SK-N-SH (cell line): ENCODE measurements at regions of chr5 and their contacts with region 1.

Region 1: GRCh38 chr5:64811050-64811640 is 42.4 kb downstream of the CWC27 start:
- DNase-seq: peak; percentile 9
- H3K4me3 ChIP-seq: no peak overlapping the region; a peak in 1 of 4 replicates
- H3K27ac ChIP-seq: no peak overlapping the region
- H3K4me1 ChIP-seq: peaks cover 0 to 5% of the 10 kb centered on the region in 2 experiments; a peak in 2 of 4 replicates
- H3K27me3 ChIP-seq: no peaks in the 10 kb centered on the region
- CTCF ChIP-seq: peak; percentile 86
- EP300 ChIP-seq: no peak
- RAD21 ChIP-seq: peak; percentile 92

Region 2: DNA sequence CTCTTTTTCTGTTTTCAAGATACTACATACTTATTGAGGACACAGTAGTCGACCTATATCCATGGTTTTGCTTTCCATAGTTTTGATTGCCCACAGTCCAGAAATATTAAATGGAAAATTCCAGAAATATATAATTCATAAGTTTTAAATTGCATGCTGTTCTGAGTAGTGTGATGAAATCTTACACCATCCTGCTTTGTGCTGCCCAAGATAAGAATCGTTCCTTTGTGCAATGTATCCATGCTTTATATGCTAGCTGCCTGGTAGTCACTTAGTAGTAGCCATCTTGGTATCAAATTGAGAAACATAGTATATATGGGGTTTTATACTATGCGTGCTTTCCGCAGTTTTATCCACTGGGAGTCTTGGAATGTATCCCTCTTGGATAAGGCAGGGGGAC is 16.6 kb after region 1 on chr5:
- CTCF ChIA-PET with region 1: interaction called, 10 read pairs
- POLR2A ChIA-PET with region 1: no interaction called
- DNase-seq: no peak
- H3K4me3 ChIP-seq: no peak overlapping the region
- H3K27ac ChIP-seq: no peak overlapping the region
- H3K4me1 ChIP-seq: no peaks in the 10 kb centered on the region
- H3K27me3 ChIP-seq: no peaks in the 10 kb centered on the region
- CTCF ChIP-seq: no peak
- EP300 ChIP-seq: no peak
- RAD21 ChIP-seq: no peak

Region 3: GRCh38 chr5:64958757-64959391 is 147.7 kb after region 1 on chr5:
- CTCF ChIA-PET with region 1: interaction called, 10 read pairs
- POLR2A ChIA-PET with region 1: no interaction called
- DNase-seq: peak; percentile 11
- H3K4me3 ChIP-seq: no peak overlapping the region
- H3K27ac ChIP-seq: no peak overlapping the region
- H3K4me1 ChIP-seq: no peaks in the 10 kb centered on the region; a peak in 1 of 4 replicates
- H3K27me3 ChIP-seq: no peaks in the 10 kb centered on the region
- CTCF ChIP-seq: peak; percentile 81
- EP300 ChIP-seq: no peak
- RAD21 ChIP-seq: peak; percentile 79

Region 4: DNA sequence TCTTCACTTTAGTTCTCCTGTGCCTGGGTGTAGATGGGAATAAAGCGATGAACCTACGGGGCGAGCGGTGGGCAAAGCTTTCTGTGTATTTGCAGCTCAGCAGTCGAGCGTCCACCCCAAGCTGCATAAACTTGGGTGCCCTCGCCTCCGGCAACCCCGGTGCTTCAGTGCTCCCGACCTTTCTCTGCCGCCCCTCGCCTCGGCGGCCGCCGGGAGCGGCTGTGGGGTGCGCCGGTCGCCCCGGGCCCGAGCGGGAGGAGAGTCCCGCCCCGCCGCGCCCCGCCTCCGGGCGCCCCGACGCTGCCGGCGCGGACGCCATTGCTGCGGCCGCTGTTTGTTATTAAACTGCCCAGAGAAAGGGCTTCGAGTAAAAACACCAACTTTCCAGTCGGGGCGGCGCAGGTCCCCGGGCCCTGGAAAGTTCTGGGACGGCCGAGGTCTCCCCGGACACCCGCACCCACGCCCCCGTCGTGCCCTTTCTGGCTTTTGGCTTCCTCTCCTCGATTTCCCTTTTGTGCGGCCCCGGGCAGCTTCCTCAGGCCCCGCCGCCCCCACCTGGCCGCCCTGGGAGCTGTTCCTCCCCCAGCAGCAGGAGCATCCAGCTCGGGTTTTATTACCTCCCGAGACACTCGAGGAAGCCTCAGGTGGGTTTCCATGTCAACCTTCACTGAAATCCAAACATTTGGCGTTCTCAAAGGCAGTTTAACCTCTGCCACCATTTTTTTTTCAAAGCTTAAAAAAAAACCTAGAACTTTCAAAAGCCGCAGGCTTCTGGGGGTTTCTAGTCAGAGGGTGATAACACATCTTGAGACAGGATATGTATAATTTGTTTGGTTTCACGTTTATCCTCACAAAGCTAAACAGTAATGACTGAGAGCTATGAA is 291.9 kb after region 1 on chr5:
- CTCF ChIA-PET with region 1: interaction called, 11 read pairs
- POLR2A ChIA-PET with region 1: no interaction called
- DNase-seq: peak; percentile 79
- H3K4me3 ChIP-seq: peak overlapping the region in 1 of 2 experiments; percentile 42; a peak in 2 of 4 replicates
- H3K27ac ChIP-seq: peak overlapping the region in 1 of 2 experiments; percentile 22; a peak in 1 of 4 replicates
- H3K4me1 ChIP-seq: peaks cover 6 to 8% of the 10 kb centered on the region in 2 experiments; a peak in 2 of 4 replicates
- H3K27me3 ChIP-seq: no peaks in the 10 kb centered on the region
- CTCF ChIP-seq: no peak
- EP300 ChIP-seq: no peak
- RAD21 ChIP-seq: no peak

Region 5: DNA sequence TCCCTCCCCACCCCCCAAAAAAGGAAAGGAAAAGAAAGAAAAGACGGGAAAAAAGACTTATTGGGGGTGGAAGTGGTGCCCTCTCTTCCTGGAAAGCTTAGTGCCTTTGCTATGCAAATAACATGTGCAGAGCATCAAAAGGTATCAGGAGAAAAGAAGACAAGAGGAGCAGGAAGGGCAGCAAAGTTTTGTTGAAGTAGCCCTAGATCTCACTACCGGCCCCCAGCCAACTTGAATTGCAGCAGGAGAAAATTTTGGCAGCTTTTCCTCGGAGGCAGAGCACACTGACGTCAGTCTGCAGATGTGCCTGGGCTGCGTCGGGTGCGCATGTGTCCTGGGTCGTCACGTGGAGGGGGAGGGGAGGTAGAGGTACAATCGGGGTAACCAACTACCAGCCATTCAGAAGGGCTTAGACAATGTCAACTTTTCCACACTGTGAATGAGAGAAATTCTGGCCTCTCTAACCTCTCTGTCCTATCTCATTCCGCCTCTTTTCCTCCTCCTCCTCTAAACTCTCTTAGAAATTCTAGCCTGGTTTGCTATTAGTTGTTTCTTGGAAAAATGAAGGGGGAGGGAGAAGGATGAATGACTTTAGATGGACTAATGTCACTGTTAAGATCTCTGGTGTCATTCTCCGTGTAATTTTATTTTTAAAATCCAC is 670.6 kb after region 1 on chr5 and contains the start of gene ADAMTS6:
- CTCF ChIA-PET with region 1: interaction called, 53 read pairs
- POLR2A ChIA-PET with region 1: no interaction called
- DNase-seq: peak; percentile 78
- H3K4me3 ChIP-seq: peak within 1 kb of the TSS; percentile 74 to 89
- H3K27ac ChIP-seq: peak within 1 kb of the TSS; percentile 94 to 97
- H3K4me1 ChIP-seq: peaks cover 0 to 12% of the 10 kb centered on the region in 2 experiments; a peak in 1 of 4 replicates
- H3K27me3 ChIP-seq: no peaks in the 10 kb centered on the region
- CTCF ChIP-seq: no peak
- EP300 ChIP-seq: peak in 1 of 2 experiments; percentile 19; a peak in 1 of 4 replicates
- RAD21 ChIP-seq: peak; percentile 39; the same call in 1 of the 2 replicates
- polyA plus RNA-seq, gene ADAMTS6: 15.0 and 25.8 TPM in 2 replicates